Head of caudate nucleus (tissue), 42 donors: ENCODE measurements at regions of chr17 and their contacts with region 1.

Region 1: DNA sequence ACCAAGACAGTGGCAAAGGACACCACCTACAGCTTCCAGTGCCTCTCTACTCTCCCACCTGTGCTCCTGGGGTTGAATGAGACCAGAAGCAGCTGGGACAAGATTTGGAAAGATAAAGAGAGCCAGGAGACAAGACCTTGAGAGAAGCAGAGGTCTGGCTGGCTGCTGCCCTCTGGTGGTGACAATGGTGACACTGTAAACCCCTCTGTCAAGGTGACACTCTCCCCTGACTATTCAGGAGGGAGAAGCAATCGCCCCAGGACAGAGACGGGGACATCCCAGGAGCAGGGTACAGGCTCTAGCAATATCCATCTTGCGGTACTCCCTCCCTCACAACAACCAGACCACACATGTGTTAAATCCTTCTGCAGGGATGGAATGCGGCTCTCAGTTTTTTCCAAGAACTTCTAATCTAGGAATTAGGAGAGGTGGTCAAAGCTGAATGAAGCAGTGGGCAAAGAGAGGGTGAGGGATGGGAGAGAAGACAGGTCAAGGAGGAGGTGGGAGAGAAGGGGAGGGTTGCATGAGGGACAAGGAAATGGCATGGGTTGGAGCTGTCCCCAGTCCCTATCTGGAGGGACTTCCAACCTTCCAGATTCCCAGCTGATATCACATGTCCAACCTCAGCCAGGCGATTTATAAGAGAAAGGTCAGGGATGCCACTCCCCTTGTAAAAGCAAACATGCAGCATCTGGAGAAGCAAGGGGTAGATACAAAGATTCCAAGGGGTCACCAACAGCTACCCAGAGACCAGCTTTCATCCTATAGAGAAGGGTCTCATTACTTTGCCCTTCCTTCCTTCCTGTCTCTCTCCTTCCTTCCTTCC is 2.9 kb downstream of the PHOSPHO1 start:
- DNase-seq: peak; percentile 67 to 90 (median 83)

Region 2: DNA sequence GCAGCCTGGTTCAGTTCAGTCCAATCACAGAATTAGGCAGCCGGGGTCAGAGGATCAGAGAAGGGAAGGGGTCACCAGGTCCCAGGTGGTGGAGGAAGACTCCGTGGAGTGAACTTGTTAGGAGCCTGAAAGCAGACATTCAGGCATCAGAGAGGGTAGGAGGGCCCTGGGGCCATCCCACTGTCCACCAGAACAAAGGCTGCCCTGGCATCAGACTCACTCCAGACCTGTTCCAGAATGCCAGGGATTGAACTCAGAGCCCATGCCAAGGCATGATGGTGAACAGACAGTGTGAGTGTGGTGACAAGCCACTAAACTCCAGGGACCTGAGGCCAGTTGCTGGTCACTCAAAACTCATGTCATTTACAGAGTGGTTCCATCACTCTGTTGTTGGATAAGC is 57.4 kb before region 1 on chr17:
- intact Hi-C with region 1: loop called (anchors 10 kb)
- DNase-seq: no peak

Region 3: GRCh38 chr17:49191917-49192741 is 35.5 kb before region 1 on chr17:
- intact Hi-C with region 1: loop called (anchors 5 kb)
- DNase-seq: peak; percentile 85 to 97 (median 92)